A549 (cell line): ENCODE measurements at regions of chr16 and their contacts with region 1.

Region 1: DNA sequence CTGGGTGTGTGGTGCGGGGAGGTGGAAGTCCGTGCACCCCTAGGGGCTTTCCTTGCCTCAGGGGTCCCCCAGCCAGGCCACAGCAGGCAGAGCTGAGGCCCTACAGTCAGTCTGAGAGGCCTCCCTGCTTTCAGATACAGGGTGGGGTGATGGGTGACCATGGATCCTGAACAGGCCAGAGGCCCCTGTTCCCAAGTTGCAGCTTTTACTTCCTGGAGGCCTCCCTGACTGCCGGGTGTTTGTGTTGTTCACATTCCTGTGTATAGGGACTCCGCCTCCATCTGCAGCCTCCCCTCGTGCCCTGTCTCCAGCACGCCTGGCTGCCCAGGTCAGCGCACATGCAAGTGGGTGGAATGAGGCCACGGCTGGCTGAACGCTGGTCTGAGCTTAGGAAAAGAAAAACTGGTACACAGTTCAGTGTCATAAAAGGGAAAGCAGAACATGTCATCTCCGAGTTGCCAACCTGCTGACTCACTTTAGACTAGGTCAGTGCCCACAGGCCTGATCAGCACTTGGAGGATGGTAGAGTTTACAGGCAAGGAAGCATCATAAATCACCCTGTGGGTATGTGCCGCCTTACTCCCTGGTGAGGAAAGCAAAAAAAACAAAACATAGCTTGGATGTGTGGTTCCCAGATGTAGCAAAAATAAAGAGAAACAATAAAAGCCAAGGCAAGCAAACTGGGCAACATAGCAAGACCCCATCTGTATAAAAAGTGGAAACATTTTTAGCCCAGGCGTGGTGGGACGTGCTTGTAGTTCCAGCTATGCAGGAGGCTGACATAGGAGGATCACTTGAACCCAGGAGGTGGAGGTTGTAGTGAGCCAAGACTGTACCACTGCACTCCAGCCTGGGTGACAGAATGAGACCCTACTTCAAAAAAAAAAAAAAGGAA is 6.2 kb upstream of the SLC7A6 start:
- DNase-seq: peak in 1 of 2 experiments; percentile 65
- ATAC-seq: peak; percentile 54 to 74; a peak in 4 of 6 replicates
- H3K4me3 ChIP-seq: no peak overlapping the region
- H3K27ac ChIP-seq: peak overlapping the region; percentile 63 to 83
- H3K4me1 ChIP-seq: peaks cover 18% of the 10 kb centered on the region
- CTCF ChIP-seq: no peak
- EP300 ChIP-seq: no peak
- POLR2A ChIP-seq: no peak
- RAD21 ChIP-seq: no peak

Region 2: DNA sequence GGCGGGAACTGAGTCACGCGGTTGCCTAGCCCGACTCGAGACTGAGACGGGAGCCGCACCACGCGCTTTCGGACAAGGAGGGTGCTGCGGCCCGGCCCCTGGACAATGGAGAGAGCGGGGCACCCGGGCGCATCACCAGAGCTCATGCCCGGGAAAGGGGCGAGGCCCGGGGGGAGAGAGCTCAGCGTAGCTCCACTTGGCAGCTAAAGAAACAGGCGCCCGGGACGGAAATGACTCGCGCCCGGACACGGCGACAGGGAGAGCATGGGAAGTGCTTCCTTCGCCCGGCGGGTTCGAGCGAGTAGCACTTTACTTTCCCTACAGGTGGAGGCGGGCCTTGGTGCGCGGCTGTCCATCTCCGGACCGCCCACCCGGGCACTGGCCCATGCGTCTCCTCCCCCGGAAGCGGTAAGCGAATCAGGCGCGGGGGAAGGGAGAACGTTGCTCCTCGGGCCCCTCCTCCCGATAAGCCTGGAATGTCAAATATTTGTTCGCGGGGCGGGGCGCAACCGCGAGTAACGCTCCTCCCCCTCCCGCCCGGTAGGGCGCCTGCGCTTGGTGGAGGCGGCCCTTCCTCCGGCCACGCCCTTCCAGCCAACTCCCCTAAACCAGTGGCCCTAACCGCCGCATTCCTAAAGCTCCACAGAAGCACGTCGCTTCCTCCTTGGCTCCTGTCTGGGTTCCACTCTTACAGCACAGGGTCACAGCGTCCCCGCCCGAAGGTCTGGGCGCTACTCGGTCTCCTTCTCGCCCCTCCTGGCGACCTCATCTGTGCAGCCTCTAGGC is 20.7 kb before region 1 on chr16:
- CTCF ChIA-PET with region 1: interaction called, 95 read pairs
- POLR2A ChIA-PET with region 1: interaction called, 7 read pairs
- DNase-seq: peak; percentile 95 to 99
- ATAC-seq: peak; percentile 85 to 94
- H3K4me3 ChIP-seq: peak overlapping the region; percentile 48
- H3K27ac ChIP-seq: peak overlapping the region; percentile 93 to 94
- H3K4me1 ChIP-seq: peaks cover 15% of the 10 kb centered on the region
- CTCF ChIP-seq: no peak
- EP300 ChIP-seq: no peak
- POLR2A ChIP-seq: peak; percentile 97
- RAD21 ChIP-seq: no peak

Region 3: GRCh38 chr16:68244903-68245853 is 13.0 kb before region 1 on chr16 and contains the start of gene PLA2G15:
- CTCF ChIA-PET with region 1: interaction called, 124 read pairs
- POLR2A ChIA-PET with region 1: no interaction called
- DNase-seq: peak; percentile 89 to 95
- ATAC-seq: peak; percentile 92 to 96
- H3K4me3 ChIP-seq: peak within 1 kb of the TSS; percentile 75
- H3K27ac ChIP-seq: peak within 1 kb of the TSS; percentile 69 to 87
- H3K4me1 ChIP-seq: peaks cover 12% of the 10 kb centered on the region; the same call in 2 of the 3 replicates
- CTCF ChIP-seq: no peak
- EP300 ChIP-seq: no peak
- POLR2A ChIP-seq: peak; percentile 55
- RAD21 ChIP-seq: no peak
- polyA plus RNA-seq, gene PLA2G15: 4.8 and 5.7 TPM in 2 replicates

Region 4: DNA sequence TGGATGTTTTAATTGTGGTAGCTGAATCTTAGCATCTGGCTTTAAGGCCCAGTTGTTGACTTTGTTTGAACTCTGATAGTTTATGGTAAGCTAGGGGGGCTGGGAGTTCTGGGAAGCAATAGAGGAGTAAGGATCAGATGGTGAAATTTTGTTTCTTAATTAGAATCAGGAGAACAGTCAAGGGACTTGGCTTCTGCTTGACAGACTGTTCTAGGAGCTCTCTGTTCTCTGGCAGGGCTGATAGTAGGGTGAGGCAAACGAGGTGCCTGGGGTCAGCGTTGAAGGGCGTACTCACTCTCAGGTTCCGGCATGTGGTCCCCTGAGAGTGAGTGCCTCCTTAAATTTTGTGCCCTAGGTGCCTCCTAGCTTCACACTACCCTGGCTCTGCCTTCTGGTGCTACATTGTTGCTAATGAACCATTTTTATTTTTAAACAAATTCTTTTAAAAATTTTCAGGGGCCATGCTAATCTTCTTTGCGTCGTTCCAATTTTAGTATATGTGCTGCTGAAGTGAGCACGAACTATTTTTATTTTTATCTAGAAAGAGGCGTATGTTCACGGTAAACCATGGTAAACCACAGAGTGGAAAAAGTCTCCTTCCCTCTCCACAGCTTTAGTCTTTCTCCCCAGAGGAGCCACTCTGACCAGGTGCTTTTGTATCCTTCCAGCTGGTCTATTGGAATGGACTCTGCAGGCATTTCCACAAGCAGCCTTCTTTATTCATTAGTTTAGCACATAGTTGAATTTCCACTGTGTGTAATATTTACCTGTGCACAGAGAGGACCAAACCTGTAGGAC is 25.8 kb after region 1 on chr16:
- CTCF ChIA-PET with region 1: interaction called, 35 read pairs
- POLR2A ChIA-PET with region 1: no interaction called
- DNase-seq: no peak
- ATAC-seq: no peak
- H3K4me3 ChIP-seq: no peak overlapping the region
- H3K27ac ChIP-seq: no peak overlapping the region
- H3K4me1 ChIP-seq: peaks cover 15% of the 10 kb centered on the region
- CTCF ChIP-seq: no peak
- EP300 ChIP-seq: no peak
- POLR2A ChIP-seq: no peak
- RAD21 ChIP-seq: no peak

Region 5: GRCh38 chr16:68298907-68299561 is 40.9 kb after region 1 on chr16:
- CTCF ChIA-PET with region 1: interaction called, 42 read pairs
- POLR2A ChIA-PET with region 1: no interaction called
- DNase-seq: no peak
- ATAC-seq: peak in 1 of 2 experiments; percentile 13; a peak in 2 of 6 replicates
- H3K4me3 ChIP-seq: no peak overlapping the region
- H3K27ac ChIP-seq: no peak overlapping the region
- H3K4me1 ChIP-seq: peaks cover 13% of the 10 kb centered on the region; the same call in 2 of the 3 replicates
- CTCF ChIP-seq: no peak
- EP300 ChIP-seq: no peak
- POLR2A ChIP-seq: no peak
- RAD21 ChIP-seq: no peak